A673 (cell line): ENCODE measurements at regions of chr4 and their contacts with region 1.

Region 1: GRCh38 chr4:168710353-168710946 is 213.6 kb downstream of the PALLD start:
- DNase-seq: peak; percentile 78
- H3K4me3 ChIP-seq: no peak overlapping the region
- H3K27ac ChIP-seq: no peak overlapping the region
- H3K4me1 ChIP-seq: peaks cover 23% of the 10 kb centered on the region
- H3K27me3 ChIP-seq: no peaks in the 10 kb centered on the region
- CTCF ChIP-seq: peak; percentile 79

Region 2: GRCh38 chr4:168499241-168499640 is 211.2 kb before region 1 on chr4:
- CTCF ChIA-PET with region 1: no interaction called
- POLR2A ChIA-PET with region 1: interaction called, 12 read pairs
- intact Hi-C with region 1: no loop called
- DNase-seq: no peak
- H3K4me3 ChIP-seq: no peak overlapping the region
- H3K27ac ChIP-seq: no peak overlapping the region
- H3K4me1 ChIP-seq: no peaks in the 10 kb centered on the region
- H3K27me3 ChIP-seq: no peaks in the 10 kb centered on the region
- CTCF ChIP-seq: no peak

Region 3: GRCh38 chr4:168585168-168586091 is 125.0 kb before region 1 on chr4:
- CTCF ChIA-PET with region 1: interaction called, 8 read pairs
- POLR2A ChIA-PET with region 1: no interaction called
- intact Hi-C with region 1: loop called (anchors 2 kb)
- DNase-seq: peak; percentile 91
- H3K4me3 ChIP-seq: no peak overlapping the region
- H3K27ac ChIP-seq: no peak overlapping the region
- H3K4me1 ChIP-seq: peaks cover 26% of the 10 kb centered on the region
- H3K27me3 ChIP-seq: no peaks in the 10 kb centered on the region
- CTCF ChIP-seq: peak; percentile 91

Region 4: DNA sequence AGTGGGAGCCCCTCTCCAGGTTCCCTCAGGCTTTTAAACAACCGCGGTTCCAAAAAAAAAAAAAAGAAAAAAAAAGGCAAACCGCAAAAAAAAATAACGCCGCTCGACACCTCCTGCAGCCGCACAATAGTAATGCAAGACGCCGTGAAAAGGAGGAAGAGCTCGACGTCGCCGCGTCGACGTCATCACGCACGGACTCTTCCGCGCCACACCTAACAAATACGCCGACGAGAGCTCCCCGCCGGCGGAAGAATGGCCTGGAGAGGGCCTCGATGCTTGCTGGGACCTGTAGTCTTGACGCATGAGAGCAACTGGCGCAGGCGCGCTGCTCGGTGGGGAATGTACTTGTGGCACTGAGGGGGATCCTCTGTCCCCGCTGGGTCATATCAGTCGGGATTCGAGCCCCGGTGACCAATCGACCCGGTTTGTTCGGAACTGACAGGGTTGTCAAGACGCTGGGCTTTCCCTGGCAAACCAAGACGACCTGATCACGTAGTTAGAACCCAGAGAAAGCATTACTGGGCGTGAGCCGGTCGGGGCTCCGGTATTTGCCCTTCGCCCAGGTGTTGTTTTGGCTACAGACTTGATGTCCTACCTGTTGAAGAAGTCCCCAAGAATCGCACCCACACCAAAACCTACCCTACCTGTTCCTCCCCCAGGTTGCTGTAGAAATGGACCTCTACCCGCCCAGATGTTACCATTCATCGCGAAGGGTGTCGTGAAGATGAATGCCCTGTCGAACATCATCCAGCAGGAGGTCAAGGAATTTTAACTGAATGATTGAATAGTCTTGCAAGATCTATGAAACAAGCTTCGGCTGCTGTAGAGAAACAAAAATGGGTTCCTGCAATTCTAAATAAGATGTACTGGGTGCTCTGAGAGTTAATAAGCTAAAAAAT is 299.9 kb after region 1 on chr4 and contains the start of gene CBR4:
- CTCF ChIA-PET with region 1: no interaction called
- POLR2A ChIA-PET with region 1: no interaction called
- intact Hi-C with region 1: loop called (anchors 5 kb)
- DNase-seq: peak; percentile 99
- H3K4me3 ChIP-seq: peak within 1 kb of the TSS; percentile 77
- H3K27ac ChIP-seq: peak within 1 kb of the TSS; percentile 93
- H3K4me1 ChIP-seq: peaks cover 9% of the 10 kb centered on the region
- H3K27me3 ChIP-seq: no peaks in the 10 kb centered on the region
- CTCF ChIP-seq: peak; percentile 12; the same call in 1 of the 2 replicates
- total RNA-seq, gene CBR4: 31.4 and 31.6 TPM in 2 replicates